Right ventricle myocardium inferior (tissue), 1 donor: ENCODE measurements at regions of chr19 and their contacts with region 1.

Region 1: GRCh38 chr19:1113033-1113985 is 9.5 kb downstream of the GPX4 start:
- DNase-seq: peak; percentile 97
- ATAC-seq: peak; percentile 94

Region 2: DNA sequence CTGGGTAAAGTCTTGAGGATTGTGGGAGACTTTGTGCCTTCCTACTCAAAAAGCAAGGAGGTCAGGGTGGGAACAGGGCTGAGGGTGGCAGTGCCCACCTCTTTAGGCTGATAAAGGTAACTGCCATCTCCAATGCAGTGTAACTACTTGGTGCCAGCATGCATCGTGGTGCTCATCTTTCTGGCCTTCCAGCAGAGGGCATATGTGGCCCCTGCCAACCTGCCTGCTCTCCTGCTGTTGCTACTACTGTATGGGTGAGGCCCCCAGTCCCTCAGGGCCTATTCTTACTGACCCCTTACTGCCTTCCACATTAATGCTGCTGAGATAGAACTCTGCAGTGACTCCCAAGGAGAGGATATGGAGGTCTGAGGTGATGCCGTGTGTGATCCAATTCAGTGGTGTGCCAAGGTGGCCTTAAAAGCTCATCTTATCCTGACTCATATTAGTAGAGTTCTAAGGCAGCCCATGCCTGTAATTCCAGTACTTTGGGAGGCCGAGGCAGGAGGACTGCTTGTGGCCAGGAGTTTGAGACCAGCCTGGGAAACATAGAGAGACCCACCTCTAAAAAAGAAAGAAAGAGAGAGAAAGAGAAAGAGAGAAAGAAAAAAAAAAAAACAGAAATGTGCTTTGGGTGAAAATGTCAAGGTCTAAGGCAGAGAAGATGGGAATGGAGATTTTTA is 56.0 kb before region 1 on chr19:
- intact Hi-C with region 1: no loop called
- DNase-seq: no peak
- ATAC-seq: no peak

Region 3: GRCh38 chr19:1094975-1095701 is 18.2 kb before region 1 on chr19 and contains the start of gene POLR2E:
- intact Hi-C with region 1: no loop called
- DNase-seq: peak; percentile 100
- ATAC-seq: peak; percentile 96
- total RNA-seq, gene POLR2E: 142 TPM

Region 4: DNA sequence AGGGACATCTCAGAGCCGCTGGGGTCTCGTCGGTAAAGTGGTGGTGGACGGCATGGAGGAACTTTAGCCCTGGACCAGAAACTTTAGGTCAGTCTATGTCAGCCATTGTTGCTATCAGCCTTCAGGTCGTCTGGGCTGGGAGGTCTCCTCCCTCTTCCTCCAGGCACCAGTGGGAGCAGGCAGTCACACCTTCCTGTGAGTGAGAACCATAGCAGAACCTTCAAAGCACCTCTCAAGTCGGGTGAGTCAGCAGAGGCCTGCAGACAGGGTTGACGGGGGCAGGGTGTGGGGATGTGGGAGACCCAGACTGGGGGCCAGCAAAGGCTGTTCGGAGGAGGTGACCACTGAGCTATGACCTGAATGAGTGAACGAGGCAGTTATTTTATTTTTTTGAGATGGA is 76.1 kb after region 1 on chr19:
- intact Hi-C with region 1: loop called (anchors 5 kb)
- DNase-seq: no peak
- ATAC-seq: no peak

Region 5: DNA sequence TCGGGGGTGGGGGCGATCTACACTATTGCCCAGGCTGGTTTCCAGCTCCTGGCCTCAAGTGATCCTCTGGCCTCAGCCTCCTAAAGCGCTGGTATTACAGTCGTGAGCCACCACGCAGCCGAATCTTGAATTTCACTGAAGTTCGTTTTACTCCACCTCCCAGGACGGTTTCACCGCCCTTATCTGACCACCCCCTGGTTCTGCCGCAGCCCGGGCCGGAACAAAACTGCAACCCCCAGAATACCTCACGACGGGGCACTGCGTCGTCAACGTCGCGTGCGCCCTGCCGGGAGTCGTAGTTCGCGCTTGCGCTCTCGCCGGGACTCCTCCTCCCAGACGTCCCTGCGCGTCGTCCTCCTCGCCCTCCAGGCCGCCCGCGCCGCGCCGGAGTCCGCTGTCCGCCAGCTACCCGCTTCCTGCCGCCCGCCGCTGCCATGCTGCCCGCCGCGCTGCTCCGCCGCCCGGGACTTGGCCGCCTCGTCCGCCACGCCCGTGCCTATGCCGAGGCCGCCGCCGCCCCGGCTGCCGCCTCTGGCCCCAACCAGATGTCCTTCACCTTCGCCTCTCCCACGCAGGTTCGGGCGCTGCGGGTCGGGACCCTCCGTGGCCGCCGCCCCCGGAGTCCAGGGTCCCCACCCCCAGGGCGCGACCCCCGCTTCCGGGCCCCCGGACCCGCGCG is 128.2 kb after region 1 on chr19 and contains the start of gene ATP5F1D:
- intact Hi-C with region 1: loop called (anchors 2 kb)
- DNase-seq: peak; percentile 97
- ATAC-seq: peak; percentile 64
- total RNA-seq, gene ATP5F1D: 656 TPM